Activated T-helper 1 cell treated with anti-CD3 and anti-CD28 coated beads, Interleukin-12 subunit alpha, Interleukin-12 subunit beta, Interleukin-2, Interleukin-4 antibody, amounts not matched to agents 30 ng/mL and 10 ng/mL and 1 ng/mL, durations not matched to agents 14 hours and 24 hours and 36 hours (primary cell): ENCODE measurements at regions of chr12 and their contacts with region 1.

Region 1: DNA sequence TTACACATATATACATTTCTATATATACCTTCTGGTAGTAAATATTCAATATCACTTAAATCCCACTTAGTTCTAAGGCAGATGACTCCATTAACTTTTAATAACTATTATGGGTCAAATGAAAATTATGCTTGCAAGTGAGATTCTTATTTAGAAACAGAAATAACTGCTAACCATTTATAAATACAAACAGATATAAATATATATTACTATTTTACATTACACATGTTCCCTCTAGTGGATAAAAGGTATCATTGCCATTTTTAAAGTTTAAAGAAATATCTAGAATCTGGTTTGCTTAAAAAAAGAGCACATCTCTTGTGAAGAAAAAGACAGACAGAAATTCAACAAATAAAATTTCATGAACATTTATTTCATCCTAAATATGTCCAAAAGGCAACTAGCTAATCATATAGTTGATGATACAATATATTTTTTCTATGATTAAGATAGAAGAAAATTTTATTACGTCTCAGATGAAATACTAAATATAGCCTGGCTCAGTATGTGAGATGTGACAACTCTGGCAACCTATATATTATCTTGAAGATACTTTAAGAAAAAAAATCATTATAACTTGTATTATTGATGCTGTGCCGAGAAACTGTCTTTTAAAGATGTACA is 11.7 kb upstream of the RAD51AP1 start:
- DNase-seq: no peak
- H3K4me3 Mint-ChIP-seq: no peak overlapping the region
- H3K27ac Mint-ChIP-seq: no peak overlapping the region
- H3K4me1 Mint-ChIP-seq: no peaks in the 10 kb centered on the region
- H3K27me3 Mint-ChIP-seq: no peaks in the 10 kb centered on the region

Region 2: GRCh38 chr12:4353785-4354208 is 173.2 kb before region 1 on chr12:
- intact Hi-C with region 1: loop called (anchors 1 kb)
- DNase-seq: no peak
- H3K4me3 Mint-ChIP-seq: no peak overlapping the region
- H3K27ac Mint-ChIP-seq: no peak overlapping the region
- H3K4me1 Mint-ChIP-seq: peaks cover 14% of the 10 kb centered on the region
- H3K27me3 Mint-ChIP-seq: no peaks in the 10 kb centered on the region

Region 3: GRCh38 chr12:4421590-4422031 is 105.4 kb before region 1 on chr12:
- intact Hi-C with region 1: loop called (anchors 1 kb)
- DNase-seq: no peak
- H3K4me3 Mint-ChIP-seq: no peak overlapping the region
- H3K27ac Mint-ChIP-seq: no peak overlapping the region
- H3K4me1 Mint-ChIP-seq: peaks cover 5% of the 10 kb centered on the region
- H3K27me3 Mint-ChIP-seq: peaks cover 8% of the 10 kb centered on the region